Activated naive CD4-positive, alpha-beta T cell treated with anti-CD3 and anti-CD28 coated beads for 36 hours (primary cell): ENCODE measurements at regions of chr3 and their contacts with region 1.

Region 1: DNA sequence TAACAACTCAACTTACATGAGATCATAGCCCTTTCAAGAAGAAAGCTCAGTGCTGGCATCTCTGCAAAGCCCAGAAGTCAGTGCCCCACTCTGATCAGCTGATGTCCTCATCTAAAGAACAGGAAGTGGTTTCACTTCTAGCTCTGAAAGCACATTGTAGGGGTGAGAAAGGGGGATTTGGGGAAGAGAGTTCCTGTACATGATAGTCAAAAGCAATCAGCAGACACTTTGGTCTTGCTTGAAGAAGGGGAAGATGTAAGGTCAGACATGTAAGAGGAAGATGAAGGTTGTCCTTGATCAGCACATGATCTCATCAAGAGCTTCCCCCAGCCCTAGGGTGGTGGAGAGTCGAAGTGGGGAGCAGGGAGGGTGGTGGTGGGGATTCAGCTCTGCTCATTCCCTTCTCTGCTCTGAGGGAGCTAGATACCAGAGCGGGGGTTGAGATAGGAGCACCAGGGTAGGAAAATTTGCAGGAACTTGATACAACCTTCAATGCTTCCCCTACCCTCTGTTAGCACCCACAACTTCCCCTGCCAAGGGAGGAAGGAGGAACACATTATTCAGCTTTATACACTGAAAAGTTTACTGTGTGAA is 76.4 kb upstream of the ETV5 start:
- DNase-seq: peak; percentile 65
- H3K4me3 Mint-ChIP-seq: no peak overlapping the region
- H3K27ac Mint-ChIP-seq: peak overlapping the region; percentile 52
- H3K4me1 Mint-ChIP-seq: peaks cover 13% of the 10 kb centered on the region
- H3K27me3 Mint-ChIP-seq: peaks cover 2% of the 10 kb centered on the region

Region 2: DNA sequence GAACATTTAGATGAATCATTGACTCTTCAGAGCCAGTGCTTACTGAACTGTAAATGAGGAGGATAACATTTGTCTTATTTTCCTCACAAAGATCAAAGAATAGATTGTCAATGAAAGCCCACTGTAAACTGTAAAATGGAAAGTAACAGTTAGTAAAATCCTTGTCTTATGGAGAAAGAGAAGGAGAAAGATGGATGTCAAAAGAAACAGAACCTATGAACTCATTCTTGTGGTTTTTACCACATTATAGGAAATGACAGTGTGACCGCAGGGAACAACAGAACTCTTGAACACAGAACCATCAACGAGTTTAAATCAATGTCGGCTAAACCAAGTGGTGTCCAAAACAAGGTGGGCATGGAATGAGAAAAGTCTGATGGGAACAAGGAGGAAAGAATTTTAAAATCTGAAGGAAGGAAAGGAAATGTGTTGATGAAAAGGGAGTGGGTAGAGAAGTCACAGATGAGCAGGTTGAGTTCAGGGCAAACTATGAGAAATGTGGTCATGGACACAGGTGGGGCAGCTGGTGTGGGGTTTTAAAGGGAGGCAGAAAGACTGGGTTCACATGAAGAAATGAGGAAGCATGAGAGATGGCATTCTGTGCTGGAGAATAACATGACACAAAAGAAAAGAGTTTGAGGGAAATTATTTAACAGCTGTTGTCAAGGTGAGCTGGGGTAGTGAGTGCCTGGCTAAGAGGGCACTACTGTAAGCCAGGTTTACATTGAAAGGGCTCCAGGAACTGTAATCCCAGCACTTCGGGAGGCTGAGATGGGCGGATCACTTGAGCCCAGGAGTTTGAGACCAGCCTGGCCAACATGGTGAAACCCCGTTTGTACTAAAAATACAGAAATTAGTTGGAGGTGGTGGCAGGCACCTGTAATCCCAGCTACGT is 34.0 kb before region 1 on chr3:
- CTCF ChIA-PET with region 1: interaction called, 3 read pairs
- intact Hi-C with region 1: loop called (anchors 2 kb)
- DNase-seq: peak; percentile 10
- H3K4me3 Mint-ChIP-seq: no peak overlapping the region
- H3K27ac Mint-ChIP-seq: peak overlapping the region; percentile 18
- H3K4me1 Mint-ChIP-seq: peaks cover 13% of the 10 kb centered on the region
- H3K27me3 Mint-ChIP-seq: peaks cover 48% of the 10 kb centered on the region